ENCODE measurements at regions of chr5 and their contacts with region 1.

Region 1: GRCh38 chr5:151157426-151158286 is at the start of gene ANXA6:
- DNase-seq: peak; percentile 72
- ATAC-seq: peak; percentile 77
- H3K4me3 ChIP-seq: peak within 1 kb of the TSS; percentile 87 to 93 (median 89)
- H3K4me3 Mint-ChIP-seq: peak within 1 kb of the TSS; percentile 97
- H3K27ac ChIP-seq: peak within 1 kb of the TSS; percentile 76 to 91
- H3K27ac Mint-ChIP-seq: peak within 1 kb of the TSS; percentile 97
- H3K4me1 ChIP-seq: peaks cover 63 to 74% of the 10 kb centered on the region in 2 donors
- H3K4me1 Mint-ChIP-seq: peaks cover 73% of the 10 kb centered on the region
- H3K27me3 ChIP-seq: no peaks in the 10 kb centered on the region
- H3K27me3 Mint-ChIP-seq: no peaks in the 10 kb centered on the region
- CTCF ChIP-seq: no peak
- total RNA-seq, gene ANXA6: 300 and 316 TPM in 2 replicates

Region 2: DNA sequence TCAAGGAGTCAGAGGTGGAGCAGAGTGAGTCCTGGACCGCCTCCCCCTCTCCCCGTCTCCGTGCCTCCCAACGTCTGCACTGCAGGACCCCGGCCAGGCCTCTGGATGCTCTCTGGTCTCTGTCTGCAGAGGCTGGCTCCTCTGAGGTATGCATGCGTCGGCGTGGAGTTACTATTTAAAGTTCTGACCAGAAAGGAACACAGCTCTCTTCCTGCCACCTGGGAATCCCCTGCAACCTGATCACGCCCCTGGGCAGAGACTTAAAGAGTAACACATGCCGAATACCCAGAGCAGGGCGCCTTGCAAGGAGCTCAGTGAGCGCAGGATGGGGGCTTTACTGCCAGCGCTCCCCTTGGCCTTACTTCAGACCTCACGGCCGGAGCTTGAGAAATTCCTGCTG is 16.1 kb before region 1 on chr5:
- CTCF ChIA-PET with region 1: interaction called, 1,701 read pairs
- POLR2A ChIA-PET with region 1: interaction called, 9 read pairs
- intact Hi-C with region 1: loop called (anchors 1 kb)
- DNase-seq: peak; percentile 75
- ATAC-seq: peak; percentile 95
- H3K4me3 ChIP-seq: peak overlapping the region in 4 of 5 experiments; percentile 36 to 70 (median 52)
- H3K4me3 Mint-ChIP-seq: peak overlapping the region; percentile 83
- H3K27ac ChIP-seq: peak overlapping the region; percentile 79 to 91
- H3K27ac Mint-ChIP-seq: peak overlapping the region; percentile 91
- H3K4me1 ChIP-seq: peaks cover 63 to 87% of the 10 kb centered on the region in 2 donors
- H3K4me1 Mint-ChIP-seq: peaks cover 82% of the 10 kb centered on the region
- H3K27me3 ChIP-seq: no peaks in the 10 kb centered on the region
- H3K27me3 Mint-ChIP-seq: no peaks in the 10 kb centered on the region
- CTCF ChIP-seq: no peak

Region 3: GRCh38 chr5:151183451-151184245 is 26.0 kb after region 1 on chr5:
- CTCF ChIA-PET with region 1: no interaction called
- POLR2A ChIA-PET with region 1: no interaction called
- intact Hi-C with region 1: loop called (anchors 2 kb)
- DNase-seq: no peak
- ATAC-seq: no peak
- H3K4me3 ChIP-seq: no peak overlapping the region
- H3K4me3 Mint-ChIP-seq: no peak overlapping the region
- H3K27ac ChIP-seq: peak overlapping the region in 1 of 2 donors; percentile 20
- H3K27ac Mint-ChIP-seq: no peak overlapping the region
- H3K4me1 ChIP-seq: peaks cover 12 to 15% of the 10 kb centered on the region in 2 donors
- H3K4me1 Mint-ChIP-seq: peaks cover 38% of the 10 kb centered on the region
- H3K27me3 ChIP-seq: no peaks in the 10 kb centered on the region
- H3K27me3 Mint-ChIP-seq: no peaks in the 10 kb centered on the region
- CTCF ChIP-seq: no peak